ENCODE measurements at regions of chr22 and their contacts with region 1.

Region 1: DNA sequence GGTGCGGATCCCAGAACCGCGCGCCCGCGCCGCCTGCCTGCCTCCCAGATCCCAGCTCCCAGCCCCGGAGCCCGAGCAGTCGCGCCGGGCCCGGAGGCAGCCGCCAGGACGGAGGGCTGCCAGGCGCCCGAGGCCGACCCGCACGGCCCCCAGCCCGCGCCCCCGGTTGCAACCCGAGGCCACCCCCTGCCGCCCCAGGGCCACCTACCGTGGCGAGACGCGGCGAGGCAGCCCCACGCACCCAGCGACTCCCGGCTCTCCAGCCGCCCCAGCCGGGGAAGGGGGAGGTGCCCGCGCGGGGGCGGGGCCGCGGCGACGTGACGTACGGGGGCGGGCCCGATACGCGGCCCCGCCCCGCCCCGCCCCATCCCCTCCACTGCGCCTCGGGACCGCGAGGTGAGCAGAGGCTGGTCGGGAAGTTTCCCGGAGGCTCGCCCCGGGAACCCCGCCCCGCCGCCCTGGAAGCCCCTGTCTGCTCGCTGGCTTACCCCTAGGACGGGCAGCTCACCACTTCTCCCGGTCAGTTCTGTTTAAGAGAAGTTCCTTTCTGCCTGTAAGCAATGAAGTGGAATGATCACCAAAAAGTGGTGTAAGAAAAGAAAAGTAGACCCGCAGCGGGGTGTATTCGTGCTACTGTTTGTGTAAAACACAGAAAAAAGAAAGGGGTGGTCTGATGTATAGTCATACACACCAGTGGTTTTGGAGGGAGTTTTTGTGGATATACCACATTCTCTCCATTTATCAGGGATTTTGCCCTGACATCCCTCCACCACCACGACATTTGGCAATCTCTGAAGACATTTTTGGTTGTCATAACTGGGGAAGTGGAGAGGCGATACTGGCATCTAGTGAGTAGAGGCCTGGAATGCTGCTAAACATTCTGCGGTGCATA is at the start of gene TPST2:
- DNase-seq: peak; percentile 83
- H3K4me3 ChIP-seq: peak within 1 kb of the TSS; percentile 91
- H3K27ac ChIP-seq: peak within 1 kb of the TSS; percentile 23
- H3K4me1 ChIP-seq: peaks cover 44% of the 10 kb centered on the region
- CTCF ChIP-seq: no peak
- total RNA-seq, gene TPST2: 19.1 and 19.9 TPM in 2 replicates

Region 2: DNA sequence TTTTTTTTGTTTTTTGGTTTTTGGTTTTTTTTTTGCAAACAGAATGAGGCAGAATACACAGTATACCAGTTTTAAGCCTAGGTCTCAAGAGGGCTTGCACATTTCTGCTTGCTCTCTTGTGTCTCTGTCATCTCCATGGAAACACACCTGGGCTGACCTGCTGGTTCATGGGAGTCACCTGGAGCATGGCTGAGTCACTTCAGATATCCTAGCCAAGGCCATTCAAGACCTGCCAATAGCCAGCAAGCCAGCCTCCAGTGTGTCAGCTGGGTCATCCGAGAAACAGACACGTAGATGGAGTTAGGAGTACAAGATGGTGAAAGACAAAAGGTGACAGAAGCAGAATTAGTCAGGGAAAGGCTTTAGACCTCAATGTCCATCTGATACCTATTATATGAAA is 545.0 kb before region 1 on chr22:
- CTCF ChIA-PET with region 1: no interaction called
- POLR2A ChIA-PET with region 1: no interaction called
- intact Hi-C with region 1: no loop called
- DNase-seq: no peak
- H3K4me3 ChIP-seq: no peak overlapping the region
- H3K27ac ChIP-seq: no peak overlapping the region
- H3K4me1 ChIP-seq: no peaks in the 10 kb centered on the region
- CTCF ChIP-seq: no peak

Region 3: DNA sequence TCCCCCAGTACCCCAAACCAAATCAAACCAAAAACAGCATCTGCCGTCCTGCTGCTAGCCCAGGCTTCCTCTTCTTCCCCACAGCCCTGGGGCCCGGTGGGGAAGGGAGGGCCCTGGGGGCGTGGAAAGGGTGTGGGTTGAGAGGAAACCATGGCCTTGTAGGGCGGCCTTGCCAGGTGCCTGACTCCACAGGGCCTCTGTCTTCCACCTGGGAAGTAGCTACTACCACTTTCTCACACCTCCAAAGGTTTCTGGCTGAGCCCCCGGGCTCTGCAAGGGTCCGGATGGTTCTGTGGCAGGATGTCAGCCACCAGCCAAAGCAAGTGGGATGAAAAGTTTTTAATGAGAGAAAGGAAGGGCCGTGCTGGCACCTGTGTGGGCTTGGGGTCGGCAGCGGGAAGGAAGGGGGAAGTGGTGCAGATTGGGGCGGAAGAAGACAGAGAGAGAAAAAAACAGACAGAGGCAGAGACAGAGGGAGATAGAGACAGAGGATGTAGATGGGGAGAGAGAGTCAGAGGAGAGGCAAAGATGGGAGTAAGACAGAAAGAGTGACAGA is 10.7 kb before region 1 on chr22:
- CTCF ChIA-PET with region 1: no interaction called
- POLR2A ChIA-PET with region 1: interaction called, 8 read pairs
- intact Hi-C with region 1: loop called (anchors 1 kb)
- DNase-seq: peak; percentile 73
- H3K4me3 ChIP-seq: peak overlapping the region; percentile 41
- H3K27ac ChIP-seq: peak overlapping the region; percentile 73
- H3K4me1 ChIP-seq: peaks cover 36% of the 10 kb centered on the region
- CTCF ChIP-seq: no peak

Region 4: GRCh38 chr22:27752771-27753170 is 1162.7 kb after region 1 on chr22:
- CTCF ChIA-PET with region 1: no interaction called
- POLR2A ChIA-PET with region 1: no interaction called
- intact Hi-C with region 1: no loop called
- DNase-seq: no peak
- H3K4me3 ChIP-seq: no peak overlapping the region
- H3K27ac ChIP-seq: no peak overlapping the region
- H3K4me1 ChIP-seq: no peaks in the 10 kb centered on the region
- CTCF ChIP-seq: no peak

Measured in OCI-LY7 (cell line).